ENCODE measurements at regions of chr6 and their contacts with region 1.

Region 1: GRCh38 chr6:45626087-45626891 is 248.6 kb upstream of the SUPT3H start:
- DNase-seq: peak; percentile 65
- H3K4me3 Mint-ChIP-seq: no peak overlapping the region
- H3K27ac Mint-ChIP-seq: peak overlapping the region; percentile 80
- H3K4me1 Mint-ChIP-seq: peaks cover 48% of the 10 kb centered on the region
- H3K27me3 Mint-ChIP-seq: no peaks in the 10 kb centered on the region

Region 2: GRCh38 chr6:45432977-45433376 is 193.3 kb before region 1 on chr6:
- CTCF ChIA-PET with region 1: no interaction called
- POLR2A ChIA-PET with region 1: no interaction called
- intact Hi-C with region 1: no loop called
- DNase-seq: no peak
- H3K4me3 Mint-ChIP-seq: peak overlapping the region; percentile 54
- H3K27ac Mint-ChIP-seq: peak overlapping the region; percentile 77
- H3K4me1 Mint-ChIP-seq: peaks cover 84% of the 10 kb centered on the region
- H3K27me3 Mint-ChIP-seq: no peaks in the 10 kb centered on the region

Region 3: GRCh38 chr6:45486736-45487135 is 139.6 kb before region 1 on chr6:
- CTCF ChIA-PET with region 1: no interaction called
- POLR2A ChIA-PET with region 1: no interaction called
- intact Hi-C with region 1: loop called (anchors 5 kb)
- DNase-seq: peak; percentile 45
- H3K4me3 Mint-ChIP-seq: peak overlapping the region; percentile 21
- H3K27ac Mint-ChIP-seq: peak overlapping the region; percentile 67
- H3K4me1 Mint-ChIP-seq: peaks cover 56% of the 10 kb centered on the region
- H3K27me3 Mint-ChIP-seq: no peaks in the 10 kb centered on the region

Region 4: DNA sequence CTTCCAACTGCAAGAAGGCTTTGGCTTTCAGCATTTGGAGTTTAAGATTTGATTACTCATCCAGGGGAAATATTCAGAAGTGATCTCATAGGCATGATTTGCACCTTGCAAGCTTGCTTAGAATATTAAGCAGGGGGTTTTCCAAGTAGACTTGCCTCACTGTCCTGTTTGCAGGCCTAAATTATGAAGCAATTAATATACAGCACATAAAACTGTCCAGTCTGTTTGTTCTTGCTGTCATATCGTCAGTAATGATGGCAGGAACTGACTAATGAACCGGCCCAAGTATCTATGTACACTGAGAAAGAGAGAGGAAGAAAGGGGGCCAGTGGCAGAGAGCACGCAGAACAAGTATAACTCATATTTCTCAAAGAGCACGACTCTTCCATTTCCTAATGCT is 36.1 kb before region 1 on chr6:
- CTCF ChIA-PET with region 1: interaction called, 3 read pairs
- POLR2A ChIA-PET with region 1: no interaction called
- intact Hi-C with region 1: loop called (anchors 2 kb)
- DNase-seq: no peak
- H3K4me3 Mint-ChIP-seq: no peak overlapping the region
- H3K27ac Mint-ChIP-seq: peak overlapping the region; percentile 53
- H3K4me1 Mint-ChIP-seq: peaks cover 94% of the 10 kb centered on the region
- H3K27me3 Mint-ChIP-seq: no peaks in the 10 kb centered on the region

Region 5: GRCh38 chr6:45608252-45608911 is 17.9 kb before region 1 on chr6:
- CTCF ChIA-PET with region 1: interaction called, 3 read pairs
- POLR2A ChIA-PET with region 1: interaction called, 6 read pairs
- intact Hi-C with region 1: loop called (anchors 1 kb)
- DNase-seq: peak; percentile 34
- H3K4me3 Mint-ChIP-seq: no peak overlapping the region
- H3K27ac Mint-ChIP-seq: peak overlapping the region; percentile 86
- H3K4me1 Mint-ChIP-seq: peaks cover 39% of the 10 kb centered on the region
- H3K27me3 Mint-ChIP-seq: peaks cover 1% of the 10 kb centered on the region

Region 6: DNA sequence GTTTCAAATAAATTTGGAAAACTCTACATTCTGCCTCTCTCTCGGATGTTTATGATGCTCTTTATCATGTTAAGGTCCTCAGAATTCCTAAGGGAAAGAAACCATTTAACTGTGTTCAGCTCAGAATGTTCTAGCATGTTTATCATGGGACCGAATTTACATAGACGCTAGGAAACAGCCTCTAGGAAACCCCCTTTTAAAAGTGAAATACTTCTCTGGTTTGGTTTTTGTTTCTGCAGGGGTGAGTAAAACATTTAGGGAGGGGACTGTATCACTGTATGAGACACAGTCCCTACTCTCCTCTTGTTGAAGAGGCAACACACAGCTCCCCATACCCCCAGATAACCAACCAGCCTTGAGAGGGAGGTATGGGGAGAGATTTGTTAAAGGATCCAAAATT is 19.0 kb after region 1 on chr6:
- CTCF ChIA-PET with region 1: no interaction called
- POLR2A ChIA-PET with region 1: no interaction called
- intact Hi-C with region 1: loop called (anchors 2 kb)
- DNase-seq: no peak
- H3K4me3 Mint-ChIP-seq: no peak overlapping the region
- H3K27ac Mint-ChIP-seq: peak overlapping the region; percentile 63
- H3K4me1 Mint-ChIP-seq: peaks cover 27% of the 10 kb centered on the region
- H3K27me3 Mint-ChIP-seq: no peaks in the 10 kb centered on the region

Region 7: GRCh38 chr6:45663551-45664221 is 37.4 kb after region 1 on chr6:
- CTCF ChIA-PET with region 1: no interaction called
- POLR2A ChIA-PET with region 1: interaction called, 5 read pairs
- intact Hi-C with region 1: loop called (anchors 5 kb)
- DNase-seq: peak; percentile 69
- H3K4me3 Mint-ChIP-seq: peak overlapping the region; percentile 34
- H3K27ac Mint-ChIP-seq: no peak overlapping the region
- H3K4me1 Mint-ChIP-seq: peaks cover 45% of the 10 kb centered on the region
- H3K27me3 Mint-ChIP-seq: peaks cover 20% of the 10 kb centered on the region

Region 8: GRCh38 chr6:45677381-45678284 is 51.3 kb after region 1 on chr6:
- CTCF ChIA-PET with region 1: no interaction called
- POLR2A ChIA-PET with region 1: interaction called, 3 read pairs
- intact Hi-C with region 1: loop called (anchors 5 kb)
- DNase-seq: peak; percentile 77
- H3K4me3 Mint-ChIP-seq: peak overlapping the region; percentile 60
- H3K27ac Mint-ChIP-seq: peak overlapping the region; percentile 85
- H3K4me1 Mint-ChIP-seq: peaks cover 41% of the 10 kb centered on the region
- H3K27me3 Mint-ChIP-seq: no peaks in the 10 kb centered on the region

Region 9: GRCh38 chr6:45746046-45746445 is 119.8 kb after region 1 on chr6:
- CTCF ChIA-PET with region 1: no interaction called
- POLR2A ChIA-PET with region 1: no interaction called
- intact Hi-C with region 1: no loop called
- DNase-seq: no peak
- H3K4me3 Mint-ChIP-seq: no peak overlapping the region
- H3K27ac Mint-ChIP-seq: no peak overlapping the region
- H3K4me1 Mint-ChIP-seq: peaks cover 12% of the 10 kb centered on the region
- H3K27me3 Mint-ChIP-seq: peaks cover 1% of the 10 kb centered on the region

Measured in activated CD4-positive, alpha-beta memory T cell treated with anti-CD3 and anti-CD28 coated beads for 36 hours (primary cell).